H1 (cell line): ENCODE measurements at regions of chr1 and their contacts with region 1.

Region 1: GRCh38 chr1:233679591-233680373 is 65.9 kb downstream of the KCNK1 start:
- DNase-seq: no peak
- H3K4me3 ChIP-seq: no peak overlapping the region
- H3K27ac ChIP-seq: no peak overlapping the region
- H3K4me1 ChIP-seq: peaks cover 0 to 6% (median 4%) of the 10 kb centered on the region in 4 experiments; a peak in 5 of 7 replicates
- H3K27me3 ChIP-seq: no peaks in the 10 kb centered on the region
- CTCF ChIP-seq: peak; percentile 23 to 34 (median 23); a peak in 3 of 4 replicates
- EP300 ChIP-seq: no peak
- POLR2A ChIP-seq: no peak
- RAD21 ChIP-seq: 0 out of 4 replicates have a peak, but pooled peaks of 1 of the 2 experiments have one; percentile 3

Region 2: GRCh38 chr1:233662575-233663304 is 17.0 kb before region 1 on chr1:
- CTCF ChIA-PET with region 1: interaction called, 10 read pairs
- POLR2A ChIA-PET with region 1: no interaction called
- DNase-seq: no peak
- H3K4me3 ChIP-seq: no peak overlapping the region
- H3K27ac ChIP-seq: no peak overlapping the region
- H3K4me1 ChIP-seq: 0 out of 7 replicates have a peak, but pooled peaks cover 0 to 2% (median 0%) of the 10 kb centered on the region in 4 experiments
- H3K27me3 ChIP-seq: no peaks in the 10 kb centered on the region
- CTCF ChIP-seq: no peak
- EP300 ChIP-seq: no peak
- POLR2A ChIP-seq: no peak
- RAD21 ChIP-seq: no peak